ENCODE measurements at regions of chr1 and their contacts with region 1.

Region 1: DNA sequence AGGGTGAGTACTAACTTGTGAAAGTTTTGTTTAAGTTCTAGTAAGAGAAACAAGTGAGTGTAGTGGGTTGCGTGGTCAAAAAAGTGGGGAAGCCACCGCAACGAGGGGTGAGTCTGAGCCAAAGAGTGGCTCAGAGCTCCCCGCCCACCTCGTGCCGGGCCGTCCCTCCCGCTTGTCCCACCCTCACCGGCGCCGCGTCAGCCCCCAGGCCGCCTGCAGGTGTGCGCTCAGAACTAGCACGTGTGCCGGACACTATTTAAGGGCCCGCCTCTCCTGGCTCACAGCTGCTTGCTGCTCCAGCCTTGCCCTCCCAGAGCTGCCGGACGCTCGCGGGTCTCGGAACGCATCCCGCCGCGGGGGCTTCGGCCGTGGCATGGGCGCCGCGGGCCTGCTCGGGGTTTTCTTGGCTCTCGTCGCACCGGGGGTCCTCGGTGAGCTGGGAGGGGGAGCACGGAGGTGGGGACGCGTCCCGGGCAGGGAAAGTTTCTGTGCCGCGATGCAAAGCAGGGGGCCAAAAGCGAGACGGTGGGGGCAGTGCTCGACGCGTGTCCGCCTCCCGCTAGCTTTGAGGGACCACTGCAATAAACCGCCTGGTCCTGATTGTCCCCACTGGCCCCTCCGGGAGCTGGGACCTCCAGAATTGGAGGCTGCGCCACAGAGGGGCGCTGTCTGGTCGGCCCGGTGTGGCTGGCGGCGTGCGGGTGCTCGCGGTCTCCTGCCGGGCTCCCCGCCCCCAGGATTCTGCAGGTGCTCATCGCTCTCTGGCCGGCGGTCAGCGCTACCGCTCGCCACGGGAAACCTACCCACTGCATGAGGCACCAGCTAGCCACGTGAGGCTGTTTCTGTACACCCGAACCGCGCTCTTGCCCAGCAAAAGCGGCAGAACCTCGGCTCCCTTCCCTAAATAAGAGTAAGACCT is at the start of gene CR2:
- DNase-seq: peak; percentile 74
- ATAC-seq: peak; percentile 90
- H3K4me3 Mint-ChIP-seq: no peak within 1 kb of the TSS
- H3K27ac Mint-ChIP-seq: no peak within 1 kb of the TSS
- H3K4me1 Mint-ChIP-seq: peaks cover 4% of the 10 kb centered on the region
- H3K27me3 Mint-ChIP-seq: no peaks in the 10 kb centered on the region
- CTCF ChIP-seq: no peak
- total RNA-seq, gene CR2: 30.7 and 34.1 TPM in 2 replicates

Region 2: GRCh38 chr1:207052911-207053769 is 401.2 kb before region 1 on chr1 and contains the start of gene PFKFB2:
- CTCF ChIA-PET with region 1: interaction called, 3 read pairs
- POLR2A ChIA-PET with region 1: interaction called, 8 read pairs
- intact Hi-C with region 1: loop called (anchors 1 kb)
- DNase-seq: peak; percentile 94
- ATAC-seq: peak; percentile 86
- H3K4me3 Mint-ChIP-seq: peak within 1 kb of the TSS; percentile 98
- H3K27ac Mint-ChIP-seq: peak within 1 kb of the TSS; percentile 98
- H3K4me1 Mint-ChIP-seq: peaks cover 56% of the 10 kb centered on the region
- H3K27me3 Mint-ChIP-seq: no peaks in the 10 kb centered on the region
- CTCF ChIP-seq: no peak
- total RNA-seq, gene PFKFB2: 7.6 and 10.1 TPM in 2 replicates

Region 3: GRCh38 chr1:207362962-207363858 is 91.1 kb before region 1 on chr1:
- CTCF ChIA-PET with region 1: no interaction called
- POLR2A ChIA-PET with region 1: no interaction called
- intact Hi-C with region 1: no loop called
- DNase-seq: no peak
- ATAC-seq: peak; percentile 47
- H3K4me3 Mint-ChIP-seq: no peak overlapping the region
- H3K27ac Mint-ChIP-seq: no peak overlapping the region
- H3K4me1 Mint-ChIP-seq: peaks cover 4% of the 10 kb centered on the region
- H3K27me3 Mint-ChIP-seq: no peaks in the 10 kb centered on the region
- CTCF ChIP-seq: no peak

Region 4: GRCh38 chr1:207414606-207415108 is 39.6 kb before region 1 on chr1:
- CTCF ChIA-PET with region 1: interaction called, 15 read pairs
- POLR2A ChIA-PET with region 1: interaction called, 86 read pairs
- intact Hi-C with region 1: loop called (anchors 1 kb)
- DNase-seq: no peak
- ATAC-seq: peak; percentile 76
- H3K4me3 Mint-ChIP-seq: peak overlapping the region; percentile 76
- H3K27ac Mint-ChIP-seq: peak overlapping the region; percentile 96
- H3K4me1 Mint-ChIP-seq: peaks cover 83% of the 10 kb centered on the region
- H3K27me3 Mint-ChIP-seq: no peaks in the 10 kb centered on the region
- CTCF ChIP-seq: no peak

Region 5: GRCh38 chr1:207423560-207424292 is 30.6 kb before region 1 on chr1:
- CTCF ChIA-PET with region 1: interaction called, 19 read pairs
- POLR2A ChIA-PET with region 1: interaction called, 21 read pairs
- intact Hi-C with region 1: no loop called
- DNase-seq: no peak
- ATAC-seq: peak; percentile 29
- H3K4me3 Mint-ChIP-seq: peak overlapping the region; percentile 73
- H3K27ac Mint-ChIP-seq: peak overlapping the region; percentile 65
- H3K4me1 Mint-ChIP-seq: peaks cover 63% of the 10 kb centered on the region
- H3K27me3 Mint-ChIP-seq: no peaks in the 10 kb centered on the region
- CTCF ChIP-seq: no peak

Region 6: GRCh38 chr1:207429963-207430362 is 24.3 kb before region 1 on chr1:
- CTCF ChIA-PET with region 1: interaction called, 22 read pairs
- POLR2A ChIA-PET with region 1: interaction called, 39 read pairs
- intact Hi-C with region 1: loop called (anchors 1 kb)
- DNase-seq: no peak
- ATAC-seq: peak; percentile 19
- H3K4me3 Mint-ChIP-seq: peak overlapping the region; percentile 15
- H3K27ac Mint-ChIP-seq: peak overlapping the region; percentile 74
- H3K4me1 Mint-ChIP-seq: peaks cover 87% of the 10 kb centered on the region
- H3K27me3 Mint-ChIP-seq: no peaks in the 10 kb centered on the region
- CTCF ChIP-seq: no peak

Measured in activated B cell treated with CpG ODN at 0.5 μM for 24 hours (primary cell).